CD4-positive, alpha-beta memory T cell (primary cell): ENCODE measurements at regions of chr21 and their contacts with region 1.

Region 1: GRCh38 chr21:35503671-35504070 is 454.6 kb upstream of the RUNX1 start:
- DNase-seq: peak in 3 of 5 donors; percentile 4 to 13 (median 11)
- H3K4me3 ChIP-seq: no peak overlapping the region
- H3K4me3 Mint-ChIP-seq: peak overlapping the region in 7 of 8 donors; percentile 26 to 81 (median 63)
- H3K27ac ChIP-seq: no peak overlapping the region
- H3K27ac Mint-ChIP-seq: peak overlapping the region; percentile 19 to 92 (median 58)
- H3K4me1 ChIP-seq: peaks cover 19% of the 10 kb centered on the region
- H3K4me1 Mint-ChIP-seq: peaks cover 13 to 20% (median 17%) of the 10 kb centered on the region in 4 donors
- H3K27me3 ChIP-seq: no peaks in the 10 kb centered on the region
- H3K27me3 Mint-ChIP-seq: peaks cover 6 to 15% of the 10 kb centered on the region in 2 donors

Region 2: GRCh38 chr21:35528116-35529042 is 24.7 kb after region 1 on chr21:
- CTCF ChIA-PET with region 1: interaction called, 5 read pairs
- POLR2A ChIA-PET with region 1: interaction called, 25 read pairs
- intact Hi-C with region 1: no loop called
- DNase-seq: peak in 4 of 5 donors; percentile 29 to 38 (median 36)
- H3K4me3 ChIP-seq: peak overlapping the region; percentile 59 to 65
- H3K4me3 Mint-ChIP-seq: peak overlapping the region; percentile 89 to 94 (median 90)
- H3K27ac ChIP-seq: peak overlapping the region; percentile 54
- H3K27ac Mint-ChIP-seq: peak overlapping the region; percentile 86 to 96 (median 94)
- H3K4me1 ChIP-seq: peaks cover 31% of the 10 kb centered on the region
- H3K4me1 Mint-ChIP-seq: peaks cover 21 to 45% (median 36%) of the 10 kb centered on the region in 4 donors
- H3K27me3 ChIP-seq: no peaks in the 10 kb centered on the region
- H3K27me3 Mint-ChIP-seq: no peaks in the 10 kb centered on the region

Region 3: DNA sequence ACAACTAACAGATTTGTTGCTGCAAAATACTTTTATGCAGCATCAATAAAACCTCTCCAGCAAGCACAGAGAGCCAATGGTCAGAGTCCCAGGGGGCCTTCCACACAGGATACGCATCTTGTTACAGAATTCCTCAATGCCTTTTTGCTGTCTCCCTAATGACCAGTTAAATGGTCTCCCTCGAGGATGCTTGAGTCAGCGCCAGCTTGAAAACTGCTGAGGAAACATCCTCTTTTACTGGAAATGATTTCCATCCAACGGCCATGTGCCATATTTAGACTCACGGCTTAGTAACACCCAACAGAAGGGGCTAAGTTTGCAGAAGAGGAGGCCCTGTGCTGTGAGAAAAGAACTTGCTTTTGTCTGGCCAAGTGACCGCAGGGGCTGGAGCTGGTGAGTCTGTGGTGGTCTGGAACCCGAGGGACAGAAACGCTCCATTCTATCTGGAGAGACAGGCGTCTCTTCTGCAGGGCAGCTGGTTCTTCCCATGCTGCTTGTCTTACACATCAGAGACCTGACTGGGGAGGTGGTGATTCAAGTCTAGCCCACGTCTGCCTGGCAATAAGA is 60.3 kb after region 1 on chr21:
- CTCF ChIA-PET with region 1: no interaction called
- POLR2A ChIA-PET with region 1: no interaction called
- intact Hi-C with region 1: no loop called
- DNase-seq: no peak
- H3K4me3 ChIP-seq: no peak overlapping the region
- H3K4me3 Mint-ChIP-seq: no peak overlapping the region
- H3K27ac ChIP-seq: no peak overlapping the region
- H3K27ac Mint-ChIP-seq: no peak overlapping the region
- H3K4me1 ChIP-seq: no peaks in the 10 kb centered on the region
- H3K4me1 Mint-ChIP-seq: no peaks in the 10 kb centered on the region
- H3K27me3 ChIP-seq: peaks cover 3% of the 10 kb centered on the region
- H3K27me3 Mint-ChIP-seq: peaks cover 14 to 22% of the 10 kb centered on the region in 2 donors